CD8-positive, alpha-beta memory T cell (primary cell): ENCODE measurements at regions of chr15 and their contacts with region 1.

Region 1: DNA sequence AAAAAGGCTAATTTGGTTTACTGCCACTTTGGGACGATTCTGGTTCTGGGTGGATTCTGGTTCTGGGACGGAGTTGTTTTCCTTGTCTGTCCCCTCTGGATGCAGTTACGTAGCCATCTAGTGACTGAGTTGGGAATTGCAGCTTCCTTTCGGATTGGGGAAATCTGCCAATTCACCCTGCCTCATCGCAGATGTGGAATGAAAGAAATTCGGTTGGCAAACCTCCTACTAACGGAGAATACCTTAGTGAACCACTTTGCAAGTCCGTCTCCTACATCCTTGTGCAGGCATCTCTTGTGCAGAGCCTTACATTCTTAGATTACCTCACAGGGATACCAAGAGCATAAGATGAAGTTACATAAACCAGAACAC is 31.5 kb upstream of the AP4E1 start:
- DNase-seq: peak; percentile 55 to 68 (median 63)
- H3K4me3 ChIP-seq: peak overlapping the region; percentile 23
- H3K4me3 Mint-ChIP-seq: peak overlapping the region; percentile 15 to 88 (median 83)
- H3K27ac ChIP-seq: no peak overlapping the region
- H3K27ac Mint-ChIP-seq: peak overlapping the region in 6 of 8 donors; percentile 11 to 82 (median 74)
- H3K4me1 ChIP-seq: peaks cover 10% of the 10 kb centered on the region
- H3K4me1 Mint-ChIP-seq: peaks cover 32 to 54% (median 41%) of the 10 kb centered on the region in 3 donors
- H3K27me3 ChIP-seq: no peaks in the 10 kb centered on the region
- H3K27me3 Mint-ChIP-seq: peaks cover 0 to 12% of the 10 kb centered on the region in 2 donors

Region 2: DNA sequence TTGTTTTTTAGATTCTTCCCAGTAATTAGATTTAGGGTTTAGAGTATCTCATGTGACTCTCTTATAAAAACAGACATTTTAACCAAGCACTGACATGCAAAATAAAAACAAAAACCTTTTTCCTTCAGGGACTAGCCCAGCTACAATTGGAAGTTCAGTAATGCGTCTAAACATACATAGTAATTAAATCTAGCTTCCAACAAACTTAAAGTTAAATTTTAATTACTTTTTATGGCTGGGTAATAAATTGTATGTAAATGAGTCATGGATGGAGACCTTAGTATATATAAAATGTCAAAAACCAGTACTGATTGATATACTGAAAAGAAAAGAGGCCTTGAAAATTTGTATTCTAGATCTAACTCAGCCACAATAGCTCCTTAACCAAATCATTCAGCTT is 12.1 kb before region 1 on chr15:
- CTCF ChIA-PET with region 1: interaction called, 11 read pairs
- POLR2A ChIA-PET with region 1: no interaction called
- DNase-seq: no peak
- H3K4me3 ChIP-seq: no peak overlapping the region
- H3K4me3 Mint-ChIP-seq: no peak overlapping the region
- H3K27ac ChIP-seq: no peak overlapping the region
- H3K27ac Mint-ChIP-seq: no peak overlapping the region
- H3K4me1 ChIP-seq: no peaks in the 10 kb centered on the region
- H3K4me1 Mint-ChIP-seq: no peaks in the 10 kb centered on the region
- H3K27me3 ChIP-seq: no peaks in the 10 kb centered on the region
- H3K27me3 Mint-ChIP-seq: no peaks in the 10 kb centered on the region